PC-9 (cell line): ENCODE measurements at regions of chr11 and their contacts with region 1.

Region 1: DNA sequence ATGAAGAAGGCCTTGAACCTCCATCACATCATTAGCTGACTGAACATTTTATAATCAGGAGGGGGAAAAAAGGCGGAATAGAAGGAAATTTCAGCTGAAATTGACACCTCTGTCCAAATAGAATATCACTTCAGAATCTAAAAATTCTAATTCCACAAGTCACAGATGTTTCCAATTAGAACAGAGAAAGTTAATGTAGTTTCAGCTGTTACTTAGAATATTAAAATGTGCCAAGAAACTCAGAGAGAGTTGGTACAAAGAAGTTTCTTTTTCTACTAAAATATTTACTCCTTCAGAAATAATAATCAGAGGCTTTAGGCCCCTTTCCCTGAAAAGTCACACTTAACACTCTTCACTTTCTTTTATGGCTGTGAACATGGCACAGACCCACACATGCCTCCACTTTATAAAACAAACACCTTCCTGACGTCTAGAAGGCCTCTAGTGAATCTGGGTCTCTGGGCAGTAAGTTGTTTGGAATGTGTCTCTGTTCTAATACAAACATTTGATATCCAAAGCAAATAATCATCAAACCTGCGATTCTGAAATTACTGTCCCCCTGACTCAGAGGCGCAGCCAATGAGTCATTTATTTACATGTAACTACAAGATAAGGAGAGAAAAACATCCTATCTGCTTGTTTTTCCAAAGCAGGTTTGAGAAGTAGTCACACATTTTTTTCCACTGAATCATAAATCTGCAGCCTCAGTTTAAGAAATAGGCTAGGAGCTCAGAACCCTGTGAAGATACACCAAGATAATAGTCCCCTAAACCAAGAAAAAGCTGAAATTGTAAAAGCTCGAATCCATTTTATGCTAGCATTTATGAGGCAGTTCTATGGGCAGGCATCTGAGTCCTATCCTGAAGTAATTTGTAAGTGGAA is 148.4 kb downstream of the ME3 start:
- DNase-seq: peak; percentile 62 to 100
- H3K4me3 ChIP-seq: peak overlapping the region; percentile 27; the same call in 1 of the 2 replicates
- H3K27ac ChIP-seq: peak overlapping the region; percentile 94
- H3K4me1 ChIP-seq: peaks cover 37% of the 10 kb centered on the region
- H3K27me3 ChIP-seq: no peaks in the 10 kb centered on the region
- CTCF ChIP-seq: no peak

Region 2: GRCh38 chr11:86456052-86456939 is 67.7 kb before region 1 on chr11:
- CTCF ChIA-PET with region 1: no interaction called
- POLR2A ChIA-PET with region 1: no interaction called
- intact Hi-C with region 1: loop called (anchors 1 kb)
- DNase-seq: peak; percentile 78
- H3K4me3 ChIP-seq: no peak overlapping the region
- H3K27ac ChIP-seq: no peak overlapping the region
- H3K4me1 ChIP-seq: peaks cover 31% of the 10 kb centered on the region
- H3K27me3 ChIP-seq: no peaks in the 10 kb centered on the region
- CTCF ChIP-seq: peak; percentile 96

Region 3: DNA sequence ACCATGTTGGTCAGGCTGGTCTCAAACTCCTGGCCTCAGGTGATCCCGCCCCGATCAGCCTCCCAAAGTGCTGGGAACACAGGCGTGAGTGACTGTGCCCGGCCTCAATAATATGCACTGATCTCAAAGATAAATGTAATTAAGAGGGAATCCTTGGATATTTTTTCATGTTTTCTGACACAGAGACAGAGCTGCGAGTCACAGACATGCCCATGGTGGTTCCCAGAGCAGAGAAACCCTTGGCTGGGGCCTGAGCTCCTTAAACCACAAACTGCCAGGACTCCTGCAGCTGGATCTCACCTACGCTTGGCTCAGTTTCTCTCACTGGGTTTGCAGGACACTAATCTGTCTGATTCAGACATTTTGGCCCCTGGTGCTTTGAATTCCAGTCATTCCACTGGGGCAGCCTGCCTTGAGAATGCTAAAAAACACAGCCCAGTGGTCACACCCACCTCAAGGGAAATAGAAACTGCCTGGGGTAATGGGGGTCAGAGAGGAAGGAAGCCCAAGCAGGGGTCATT is 26.7 kb before region 1 on chr11:
- CTCF ChIA-PET with region 1: no interaction called
- POLR2A ChIA-PET with region 1: no interaction called
- intact Hi-C with region 1: loop called (anchors 1 kb)
- DNase-seq: peak; percentile 81 to 96
- H3K4me3 ChIP-seq: no peak overlapping the region
- H3K27ac ChIP-seq: peak overlapping the region; percentile 91
- H3K4me1 ChIP-seq: peaks cover 55% of the 10 kb centered on the region
- H3K27me3 ChIP-seq: no peaks in the 10 kb centered on the region
- CTCF ChIP-seq: no peak

Region 4: DNA sequence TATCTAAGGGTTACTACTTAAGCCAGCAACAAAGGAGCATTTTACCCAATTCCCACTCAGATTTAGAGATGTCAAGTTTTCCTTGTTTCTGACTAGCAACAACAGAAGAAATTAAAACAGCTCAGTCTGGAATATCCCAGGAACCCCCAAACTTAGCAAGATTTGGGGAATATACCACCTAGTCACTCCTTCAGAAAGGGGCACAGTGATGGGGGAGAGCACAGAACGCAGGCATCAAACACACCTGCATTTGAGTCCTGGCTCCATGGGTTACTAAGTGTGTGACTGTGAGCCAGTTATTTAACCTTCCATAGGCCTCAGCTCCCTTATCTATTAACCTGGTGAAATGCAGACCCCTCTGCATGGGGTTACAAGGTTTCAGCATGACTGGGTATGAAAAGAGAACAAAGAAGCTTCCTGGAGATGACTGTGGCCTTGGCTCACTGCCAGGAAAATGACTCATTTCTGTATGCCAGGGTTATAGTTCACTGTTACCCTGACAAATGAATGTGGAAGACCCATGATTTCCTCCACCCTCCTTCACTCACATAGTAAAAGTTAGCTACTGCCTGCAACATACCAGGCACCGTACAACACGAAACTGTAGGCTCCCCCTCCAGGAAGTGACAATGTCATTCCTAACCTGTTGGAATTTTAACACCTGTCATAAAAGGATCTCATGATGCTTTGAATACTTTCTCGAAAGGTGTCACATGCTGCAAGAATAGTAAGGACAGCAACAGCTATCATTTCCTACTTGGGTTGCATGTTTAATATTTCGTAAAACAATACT is 68.9 kb after region 1 on chr11:
- CTCF ChIA-PET with region 1: no interaction called
- POLR2A ChIA-PET with region 1: interaction called, 3 read pairs
- intact Hi-C with region 1: loop called (anchors 1 kb)
- DNase-seq: peak; percentile 91 to 100
- H3K4me3 ChIP-seq: no peak overlapping the region
- H3K27ac ChIP-seq: peak overlapping the region; percentile 97
- H3K4me1 ChIP-seq: peaks cover 66% of the 10 kb centered on the region
- H3K27me3 ChIP-seq: no peaks in the 10 kb centered on the region
- CTCF ChIP-seq: no peak

Region 5: GRCh38 chr11:86671682-86672621 is 148.0 kb after region 1 on chr11 and contains the start of gene ME3:
- CTCF ChIA-PET with region 1: no interaction called
- POLR2A ChIA-PET with region 1: interaction called, 6 read pairs
- intact Hi-C with region 1: loop called (anchors 1 kb)
- DNase-seq: peak; percentile 63 to 74
- H3K4me3 ChIP-seq: peak within 1 kb of the TSS; percentile 82
- H3K27ac ChIP-seq: peak within 1 kb of the TSS; percentile 87
- H3K4me1 ChIP-seq: peaks cover 52% of the 10 kb centered on the region
- H3K27me3 ChIP-seq: no peaks in the 10 kb centered on the region
- CTCF ChIP-seq: no peak
- total RNA-seq, gene ME3: 34.0 and 61.1 TPM in 2 replicates

Region 6: GRCh38 chr11:86802601-86803051 is 278.6 kb after region 1 on chr11:
- CTCF ChIA-PET with region 1: no interaction called
- POLR2A ChIA-PET with region 1: no interaction called
- intact Hi-C with region 1: loop called (anchors 1 kb)
- DNase-seq: peak; percentile 46 to 93
- H3K4me3 ChIP-seq: peak overlapping the region; percentile 92
- H3K27ac ChIP-seq: peak overlapping the region; percentile 68
- H3K4me1 ChIP-seq: peaks cover 48% of the 10 kb centered on the region
- H3K27me3 ChIP-seq: no peaks in the 10 kb centered on the region
- CTCF ChIP-seq: peak; percentile 89

Region 7: GRCh38 chr11:87125257-87125656 is 601.3 kb after region 1 on chr11:
- CTCF ChIA-PET with region 1: no interaction called
- POLR2A ChIA-PET with region 1: no interaction called
- intact Hi-C with region 1: no loop called
- DNase-seq: peak in 1 of 2 experiments; percentile 40
- H3K4me3 ChIP-seq: no peak overlapping the region
- H3K27ac ChIP-seq: no peak overlapping the region
- H3K4me1 ChIP-seq: no peaks in the 10 kb centered on the region; the same call in 1 of the 2 replicates
- H3K27me3 ChIP-seq: no peaks in the 10 kb centered on the region
- CTCF ChIP-seq: no peak